Activated naive CD4-positive, alpha-beta T cell treated with anti-CD3 and anti-CD28 coated beads for 36 hours (primary cell): ENCODE measurements at regions of chr6 and their contacts with region 1.

Region 1: GRCh38 chr6:73471686-73472290 is 10.3 kb downstream of the MTO1 start:
- DNase-seq: no peak
- H3K4me3 Mint-ChIP-seq: no peak overlapping the region
- H3K27ac Mint-ChIP-seq: peak overlapping the region; percentile 63
- H3K4me1 Mint-ChIP-seq: peaks cover 18% of the 10 kb centered on the region
- H3K27me3 Mint-ChIP-seq: no peaks in the 10 kb centered on the region

Region 2: GRCh38 chr6:73349311-73349710 is 122.5 kb before region 1 on chr6:
- CTCF ChIA-PET with region 1: no interaction called
- intact Hi-C with region 1: no loop called
- DNase-seq: no peak
- H3K4me3 Mint-ChIP-seq: no peak overlapping the region
- H3K27ac Mint-ChIP-seq: no peak overlapping the region
- H3K4me1 Mint-ChIP-seq: no peaks in the 10 kb centered on the region
- H3K27me3 Mint-ChIP-seq: peaks cover 22% of the 10 kb centered on the region

Region 3: GRCh38 chr6:73461537-73462350 is 10.0 kb before region 1 on chr6 and contains the start of gene MTO1:
- CTCF ChIA-PET with region 1: interaction called, 3 read pairs
- intact Hi-C with region 1: loop called (anchors 1 kb)
- DNase-seq: peak; percentile 92
- H3K4me3 Mint-ChIP-seq: peak within 1 kb of the TSS; percentile 94
- H3K27ac Mint-ChIP-seq: peak within 1 kb of the TSS; percentile 97
- H3K4me1 Mint-ChIP-seq: peaks cover 37% of the 10 kb centered on the region
- H3K27me3 Mint-ChIP-seq: no peaks in the 10 kb centered on the region
- total RNA-seq, gene MTO1: 38.7 to 47.1 TPM

Region 4: DNA sequence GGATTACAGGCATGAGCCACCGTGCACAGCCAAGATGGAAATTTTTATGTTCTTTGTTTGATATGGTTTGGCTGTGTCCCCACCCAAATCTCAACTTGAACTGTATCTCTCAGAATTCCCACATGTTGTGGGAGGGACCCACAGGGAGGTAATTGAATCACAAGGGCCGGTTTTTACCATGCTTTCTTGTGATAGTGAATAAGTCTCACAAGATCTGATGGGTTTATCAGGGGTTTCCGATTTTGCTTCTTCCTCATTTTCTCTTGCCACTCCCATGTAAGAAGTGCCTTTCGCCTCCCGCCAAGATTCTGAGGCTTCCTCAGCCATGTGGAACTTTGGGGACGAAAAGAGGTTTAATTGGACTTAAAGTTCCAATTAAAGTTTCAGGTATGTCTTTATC is 34.5 kb after region 1 on chr6:
- CTCF ChIA-PET with region 1: interaction called, 3 read pairs
- intact Hi-C with region 1: loop called (anchors 5 kb)
- DNase-seq: no peak
- H3K4me3 Mint-ChIP-seq: no peak overlapping the region
- H3K27ac Mint-ChIP-seq: no peak overlapping the region
- H3K4me1 Mint-ChIP-seq: peaks cover 3% of the 10 kb centered on the region
- H3K27me3 Mint-ChIP-seq: no peaks in the 10 kb centered on the region

Region 5: GRCh38 chr6:73688351-73688750 is 216.6 kb after region 1 on chr6:
- CTCF ChIA-PET with region 1: no interaction called
- intact Hi-C with region 1: no loop called
- DNase-seq: no peak
- H3K4me3 Mint-ChIP-seq: no peak overlapping the region
- H3K27ac Mint-ChIP-seq: no peak overlapping the region
- H3K4me1 Mint-ChIP-seq: peaks cover 9% of the 10 kb centered on the region
- H3K27me3 Mint-ChIP-seq: peaks cover 8% of the 10 kb centered on the region